IMR-90 (cell line): ENCODE measurements at regions of chr7 and their contacts with region 1.

Region 1: DNA sequence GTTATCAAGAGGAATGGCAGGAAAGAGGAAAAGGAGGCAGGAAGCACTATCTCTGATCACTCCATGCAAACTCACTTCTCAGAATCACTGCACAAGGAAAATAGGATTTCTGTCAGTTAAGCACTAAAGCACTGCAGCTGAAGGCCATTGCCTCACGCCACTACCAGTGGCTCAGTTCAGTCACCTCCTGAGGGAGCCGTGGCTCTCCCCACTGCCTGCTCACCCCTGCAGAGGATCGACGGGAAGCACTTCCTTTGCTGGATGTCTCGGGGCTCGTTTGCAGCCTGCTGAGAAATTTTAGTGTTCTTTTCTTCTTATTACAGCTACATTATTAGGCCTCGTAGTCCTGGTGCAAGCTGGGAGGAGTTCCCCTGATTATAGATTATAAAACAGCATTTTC is 90.1 kb upstream of the ADCY1 start:
- DNase-seq: no peak
- ATAC-seq: no peak
- H3K4me3 ChIP-seq: no peak overlapping the region
- H3K27ac ChIP-seq: no peak overlapping the region
- H3K4me1 ChIP-seq: no peaks in the 10 kb centered on the region
- H3K27me3 ChIP-seq: no peaks in the 10 kb centered on the region; the same call in 1 of the 2 replicates
- CTCF ChIP-seq: no peak
- POLR2A ChIP-seq: no peak
- RAD21 ChIP-seq: no peak

Region 2: DNA sequence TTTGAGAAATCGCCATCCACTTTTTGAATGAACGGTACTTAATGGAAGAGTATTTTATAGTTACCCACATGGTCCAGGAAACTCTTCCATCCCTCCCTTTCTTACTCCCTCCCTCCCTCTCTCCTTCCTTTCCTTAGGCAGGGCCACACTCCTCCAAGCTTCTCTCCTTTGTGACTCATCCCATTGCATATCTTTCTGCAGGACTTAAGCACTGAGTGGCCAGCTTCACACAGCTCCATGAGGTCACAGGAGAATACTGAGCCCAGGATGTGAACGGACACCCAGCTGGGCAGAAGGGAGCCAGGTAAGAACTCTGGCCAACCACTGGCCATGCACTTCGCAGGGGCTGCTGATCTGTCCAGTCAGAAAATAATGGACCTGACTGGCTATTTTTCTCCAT is 99.6 kb before region 1 on chr7:
- CTCF ChIA-PET with region 1: no interaction called
- POLR2A ChIA-PET with region 1: no interaction called
- dilution Hi-C with region 1: no loop called
- in situ Hi-C with region 1: no loop called
- intact Hi-C with region 1: no loop called
- DNase-seq: peak; percentile 14
- ATAC-seq: no peak
- H3K4me3 ChIP-seq: no peak overlapping the region
- H3K27ac ChIP-seq: no peak overlapping the region
- H3K4me1 ChIP-seq: no peaks in the 10 kb centered on the region
- H3K27me3 ChIP-seq: no peaks in the 10 kb centered on the region
- CTCF ChIP-seq: no peak
- POLR2A ChIP-seq: no peak
- RAD21 ChIP-seq: no peak

Region 3: DNA sequence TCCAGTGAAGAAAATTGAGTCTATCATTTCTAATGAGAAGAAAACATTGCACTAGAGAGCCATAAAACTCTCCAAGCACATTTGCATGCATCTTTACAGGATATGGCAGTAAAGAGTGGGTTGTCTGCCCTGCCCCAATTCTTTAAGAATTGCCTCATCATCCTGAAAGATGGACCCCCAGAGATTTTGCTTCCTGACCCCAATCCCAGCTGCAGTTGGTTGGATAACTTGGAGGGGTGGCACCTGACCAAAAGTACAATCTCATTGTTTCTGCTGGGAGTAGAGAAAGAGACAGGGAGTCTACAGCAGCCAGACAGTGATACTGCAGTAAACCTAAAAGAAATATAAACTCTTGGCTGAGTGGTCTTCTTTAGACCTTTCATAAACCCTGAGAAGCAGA is 41.0 kb after region 1 on chr7:
- CTCF ChIA-PET with region 1: no interaction called
- POLR2A ChIA-PET with region 1: no interaction called
- dilution Hi-C with region 1: no loop called
- in situ Hi-C with region 1: no loop called
- intact Hi-C with region 1: loop called (anchors 5 kb)
- DNase-seq: no peak
- ATAC-seq: no peak
- H3K4me3 ChIP-seq: no peak overlapping the region
- H3K27ac ChIP-seq: no peak overlapping the region
- H3K4me1 ChIP-seq: no peaks in the 10 kb centered on the region
- H3K27me3 ChIP-seq: no peaks in the 10 kb centered on the region
- CTCF ChIP-seq: no peak
- POLR2A ChIP-seq: no peak
- RAD21 ChIP-seq: no peak

Region 4: GRCh38 chr7:47066971-47067614 is 1583.0 kb after region 1 on chr7:
- CTCF ChIA-PET with region 1: no interaction called
- POLR2A ChIA-PET with region 1: no interaction called
- dilution Hi-C with region 1: no loop called
- in situ Hi-C with region 1: no loop called
- intact Hi-C with region 1: no loop called
- DNase-seq: no peak
- ATAC-seq: no peak
- H3K4me3 ChIP-seq: no peak overlapping the region
- H3K27ac ChIP-seq: no peak overlapping the region
- H3K4me1 ChIP-seq: no peaks in the 10 kb centered on the region
- H3K27me3 ChIP-seq: peaks cover 22% of the 10 kb centered on the region
- CTCF ChIP-seq: no peak
- POLR2A ChIP-seq: no peak
- RAD21 ChIP-seq: no peak